Activated B cell treated with CpG ODN at 0.5 μM for 24 hours (primary cell): ENCODE measurements at regions of chr4 and their contacts with region 1.

Region 1: GRCh38 chr4:36399762-36400353 is 118.4 kb downstream of the DTHD1 start:
- DNase-seq: no peak
- ATAC-seq: peak; percentile 37
- H3K4me3 Mint-ChIP-seq: no peak overlapping the region
- H3K27ac Mint-ChIP-seq: no peak overlapping the region
- H3K4me1 Mint-ChIP-seq: no peaks in the 10 kb centered on the region
- H3K27me3 Mint-ChIP-seq: no peaks in the 10 kb centered on the region
- CTCF ChIP-seq: peak; percentile 87

Region 2: GRCh38 chr4:35965300-35965699 is 434.6 kb before region 1 on chr4:
- CTCF ChIA-PET with region 1: no interaction called
- POLR2A ChIA-PET with region 1: no interaction called
- intact Hi-C with region 1: no loop called
- DNase-seq: no peak
- ATAC-seq: no peak
- H3K4me3 Mint-ChIP-seq: no peak overlapping the region
- H3K27ac Mint-ChIP-seq: no peak overlapping the region
- H3K4me1 Mint-ChIP-seq: no peaks in the 10 kb centered on the region
- H3K27me3 Mint-ChIP-seq: no peaks in the 10 kb centered on the region
- CTCF ChIP-seq: no peak

Region 3: DNA sequence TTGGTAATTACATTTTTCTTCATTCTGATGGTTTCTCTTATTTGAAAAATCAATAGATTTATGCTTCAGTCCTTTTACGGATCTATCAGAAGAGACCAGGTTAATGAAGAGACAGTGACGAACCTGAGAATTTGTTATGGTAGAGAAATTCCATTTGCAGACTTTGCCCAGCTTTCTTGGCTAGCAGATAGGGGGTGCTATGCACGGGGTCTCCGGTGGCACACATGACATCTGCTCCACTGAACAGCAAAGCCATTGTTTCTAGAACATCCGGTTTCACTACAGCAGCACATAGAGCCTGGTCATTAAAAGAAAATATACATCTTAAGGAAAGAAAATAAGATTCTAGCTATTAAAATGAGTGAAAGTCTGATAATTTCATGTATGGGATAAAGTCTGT is 240.7 kb before region 1 on chr4:
- CTCF ChIA-PET with region 1: interaction called, 22 read pairs
- POLR2A ChIA-PET with region 1: no interaction called
- intact Hi-C with region 1: no loop called
- DNase-seq: no peak
- ATAC-seq: no peak
- H3K4me3 Mint-ChIP-seq: no peak overlapping the region
- H3K27ac Mint-ChIP-seq: no peak overlapping the region
- H3K4me1 Mint-ChIP-seq: no peaks in the 10 kb centered on the region
- H3K27me3 Mint-ChIP-seq: no peaks in the 10 kb centered on the region
- CTCF ChIP-seq: no peak

Region 4: DNA sequence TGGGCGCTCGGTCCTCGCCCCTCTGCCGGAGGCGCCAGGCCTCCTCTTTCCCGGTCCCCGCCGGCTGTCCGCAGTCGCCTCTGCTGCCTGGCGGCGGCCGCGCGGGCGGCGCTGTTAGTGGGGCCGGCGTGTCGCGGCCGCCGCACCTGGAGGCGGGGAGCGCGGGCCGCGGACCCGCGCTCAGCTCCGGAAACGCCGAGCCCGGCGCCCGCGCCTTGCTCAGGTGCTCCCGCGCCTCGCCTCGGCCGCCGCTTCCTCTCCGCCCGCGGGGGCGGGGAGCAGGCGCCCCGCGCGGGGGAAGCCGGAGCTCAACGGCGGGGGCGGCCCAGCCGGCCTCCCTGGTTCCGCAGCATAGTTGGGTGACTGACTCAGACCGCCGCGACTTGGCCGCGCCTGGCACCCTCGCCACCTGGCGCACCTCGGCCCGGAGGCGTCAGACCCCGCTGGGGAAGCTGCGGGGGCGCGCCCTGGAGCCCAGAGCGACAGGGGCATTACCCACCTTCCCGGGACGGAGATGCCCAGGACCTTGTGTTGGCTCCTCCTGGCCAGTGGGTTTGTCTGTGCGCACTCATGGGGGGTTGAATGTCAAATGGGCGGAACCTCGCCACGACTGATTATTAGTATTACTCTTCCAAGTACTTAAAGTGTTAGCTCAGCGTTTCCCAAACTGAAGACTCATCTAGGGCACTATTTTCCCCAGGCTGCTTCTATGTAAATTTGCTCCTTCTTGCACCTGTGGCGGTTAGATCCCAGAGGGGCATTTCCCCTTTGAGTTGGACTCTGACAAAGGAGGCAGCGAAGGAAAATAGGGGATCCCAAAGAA is 155.4 kb before region 1 on chr4 and contains the start of gene ARAP2:
- CTCF ChIA-PET with region 1: interaction called, 19 read pairs
- POLR2A ChIA-PET with region 1: no interaction called
- intact Hi-C with region 1: loop called (anchors 1 kb)
- DNase-seq: peak; percentile 78
- ATAC-seq: peak; percentile 83
- H3K4me3 Mint-ChIP-seq: peak within 1 kb of the TSS; percentile 90
- H3K27ac Mint-ChIP-seq: peak within 1 kb of the TSS; percentile 91
- H3K4me1 Mint-ChIP-seq: peaks cover 52% of the 10 kb centered on the region
- H3K27me3 Mint-ChIP-seq: no peaks in the 10 kb centered on the region
- CTCF ChIP-seq: no peak
- total RNA-seq, gene ARAP2: 55.7 and 59.1 TPM in 2 replicates

Region 5: GRCh38 chr4:36332023-36332781 is 67.7 kb before region 1 on chr4:
- CTCF ChIA-PET with region 1: interaction called, 12 read pairs
- POLR2A ChIA-PET with region 1: no interaction called
- intact Hi-C with region 1: no loop called
- DNase-seq: no peak
- ATAC-seq: peak; percentile 61
- H3K4me3 Mint-ChIP-seq: no peak overlapping the region
- H3K27ac Mint-ChIP-seq: peak overlapping the region; percentile 69
- H3K4me1 Mint-ChIP-seq: peaks cover 36% of the 10 kb centered on the region
- H3K27me3 Mint-ChIP-seq: no peaks in the 10 kb centered on the region
- CTCF ChIP-seq: no peak

Region 6: GRCh38 chr4:36385951-36386571 is 13.8 kb before region 1 on chr4:
- CTCF ChIA-PET with region 1: interaction called, 16 read pairs
- POLR2A ChIA-PET with region 1: no interaction called
- intact Hi-C with region 1: no loop called
- DNase-seq: no peak
- ATAC-seq: peak; percentile 93
- H3K4me3 Mint-ChIP-seq: peak overlapping the region; percentile 61
- H3K27ac Mint-ChIP-seq: peak overlapping the region; percentile 88
- H3K4me1 Mint-ChIP-seq: peaks cover 16% of the 10 kb centered on the region
- H3K27me3 Mint-ChIP-seq: no peaks in the 10 kb centered on the region
- CTCF ChIP-seq: no peak

Region 7: GRCh38 chr4:36432586-36432985 is 32.7 kb after region 1 on chr4:
- CTCF ChIA-PET with region 1: no interaction called
- POLR2A ChIA-PET with region 1: no interaction called
- intact Hi-C with region 1: no loop called
- DNase-seq: no peak
- ATAC-seq: no peak
- H3K4me3 Mint-ChIP-seq: no peak overlapping the region
- H3K27ac Mint-ChIP-seq: no peak overlapping the region
- H3K4me1 Mint-ChIP-seq: peaks cover 2% of the 10 kb centered on the region
- H3K27me3 Mint-ChIP-seq: peaks cover 1% of the 10 kb centered on the region
- CTCF ChIP-seq: no peak

Region 8: GRCh38 chr4:37653601-37654000 is 1253.7 kb after region 1 on chr4:
- CTCF ChIA-PET with region 1: no interaction called
- POLR2A ChIA-PET with region 1: no interaction called
- intact Hi-C with region 1: no loop called
- DNase-seq: no peak
- ATAC-seq: no peak
- H3K4me3 Mint-ChIP-seq: no peak overlapping the region
- H3K27ac Mint-ChIP-seq: no peak overlapping the region
- H3K4me1 Mint-ChIP-seq: no peaks in the 10 kb centered on the region
- H3K27me3 Mint-ChIP-seq: no peaks in the 10 kb centered on the region
- CTCF ChIP-seq: no peak